Heart right ventricle (tissue), 16 donors: ENCODE measurements at regions of chr17 and their contacts with region 1.

Region 1: DNA sequence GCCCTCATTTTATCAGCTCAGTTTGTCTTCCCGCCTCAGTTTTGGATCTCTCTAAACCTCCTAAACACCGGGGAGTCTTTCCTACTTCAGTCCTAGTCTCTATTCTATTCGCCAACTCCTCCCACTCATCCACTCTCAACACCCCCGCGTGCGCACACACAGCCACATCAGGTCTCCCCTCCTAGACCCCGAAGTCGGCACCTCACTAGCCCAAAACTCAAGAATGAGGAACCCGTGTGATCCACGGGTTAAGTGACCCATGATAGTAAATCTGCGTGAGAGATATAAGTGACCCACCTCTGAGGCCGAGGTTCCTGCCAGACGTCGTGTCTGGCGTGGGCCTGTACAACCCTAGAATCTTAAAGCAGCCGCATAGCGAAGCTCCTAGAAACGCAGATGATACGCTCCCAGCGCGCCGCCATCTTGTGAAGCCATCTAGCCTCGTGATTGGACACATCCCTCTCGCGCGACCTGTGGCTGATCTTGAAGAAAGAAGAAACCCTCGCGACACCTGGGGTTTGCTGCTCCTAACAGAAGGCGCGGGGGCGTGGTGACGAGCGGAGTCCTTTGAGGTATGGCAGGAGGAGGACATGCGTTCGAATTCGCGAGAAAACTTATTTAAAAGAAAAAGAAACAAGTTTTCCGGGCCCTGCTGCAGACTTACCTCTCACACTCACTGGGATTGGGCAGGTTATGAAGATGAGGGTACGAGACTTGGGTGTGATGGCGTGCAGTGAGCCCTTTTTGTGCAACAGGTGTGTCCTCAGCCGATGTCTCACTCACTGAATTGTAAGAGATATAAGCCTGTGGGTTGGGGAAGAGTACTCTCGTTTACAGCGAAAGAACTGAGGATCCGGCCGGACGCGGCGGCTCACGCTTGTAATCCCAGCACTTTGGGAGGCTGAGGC is at the start of gene METTL16:
- DNase-seq: peak; percentile 94 to 98
- ATAC-seq: peak; percentile 99 to 100 (median 100)
- H3K4me3 ChIP-seq: peak within 1 kb of the TSS; percentile 56 to 99 (median 72)
- H3K27ac ChIP-seq: peak within 1 kb of the TSS; percentile 69 to 97 (median 88)
- H3K4me1 ChIP-seq: peaks cover 4 to 38% (median 28%) of the 10 kb centered on the region in 9 donors
- H3K27me3 ChIP-seq: no peaks in the 10 kb centered on the region
- CTCF ChIP-seq: no peak
- total RNA-seq, gene METTL16: 18.5 to 31.9 (median 26.5) TPM

Region 2: DNA sequence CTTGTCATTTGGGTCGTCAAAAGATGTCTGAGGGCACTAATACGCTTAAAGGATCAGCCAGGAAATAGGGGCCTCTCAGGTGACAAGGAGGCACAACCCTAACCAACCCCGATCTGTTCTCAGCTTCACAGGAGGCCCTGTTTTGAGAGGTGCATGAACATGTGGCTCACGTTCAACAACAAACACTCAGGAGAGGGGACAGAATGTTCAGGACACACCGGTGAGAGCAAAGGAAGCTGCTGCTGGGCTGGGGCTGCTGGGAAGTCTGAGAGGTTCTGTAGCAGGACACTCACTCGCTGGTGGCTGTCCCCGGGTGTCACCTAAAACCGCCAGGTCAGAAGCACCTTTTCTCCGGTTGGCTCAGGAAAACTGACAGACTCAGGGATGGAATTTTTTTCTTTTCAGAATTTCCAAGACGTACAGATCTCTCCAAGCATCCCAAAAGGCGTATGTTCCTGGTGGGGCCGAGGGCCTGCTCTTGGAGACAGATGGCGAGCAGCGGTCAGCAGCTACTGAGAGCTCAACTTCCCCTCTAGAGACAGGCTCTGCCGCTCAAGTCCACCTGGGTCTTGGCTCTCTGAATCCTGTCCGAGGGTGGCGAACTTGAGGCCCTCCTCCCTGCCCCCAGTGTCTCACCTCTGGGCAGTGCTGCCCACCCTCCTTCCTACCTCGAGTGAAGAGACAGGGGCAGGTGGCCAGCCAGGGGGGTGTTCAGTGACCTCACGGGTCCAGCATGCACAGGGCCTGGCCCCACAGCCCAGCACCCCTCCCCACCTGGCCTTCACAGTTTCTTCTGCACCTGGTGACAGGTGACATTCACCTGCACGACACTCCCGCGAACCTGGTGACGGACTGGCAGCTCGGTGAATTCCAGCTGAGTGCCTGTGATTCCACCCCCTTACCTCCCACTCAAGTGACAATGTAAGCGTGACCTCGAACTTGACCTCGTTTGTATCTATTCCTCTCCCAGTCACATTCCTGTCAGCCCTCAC is 176.9 kb after region 1 on chr17:
- intact Hi-C with region 1: loop called in 2 of 10 experiments (anchors 10 kb)
- DNase-seq: peak; percentile 6 to 21
- ATAC-seq: peak in 6 of 8 donors; percentile 1 to 55 (median 20)
- H3K4me3 ChIP-seq: no peak overlapping the region
- H3K27ac ChIP-seq: peak overlapping the region in 4 of 10 donors; percentile 12 to 67 (median 28)
- H3K4me1 ChIP-seq: peaks cover 7 to 54% (median 33%) of the 10 kb centered on the region in 9 donors
- H3K27me3 ChIP-seq: no peaks in the 10 kb centered on the region
- CTCF ChIP-seq: no peak